ENCODE measurements at regions of chr6 and their contacts with region 1.

Region 1: GRCh38 chr6:33248925-33249731 is 22.5 kb downstream of the VPS52 start:
- DNase-seq: peak; percentile 95 to 98 (median 96)
- H3K4me3 ChIP-seq: peak overlapping the region; percentile 74
- H3K4me3 Mint-ChIP-seq: peak overlapping the region; percentile 82 to 96 (median 89)
- H3K27ac ChIP-seq: peak overlapping the region; percentile 90
- H3K27ac Mint-ChIP-seq: peak overlapping the region; percentile 95 to 99 (median 98)
- H3K4me1 ChIP-seq: peaks cover 24% of the 10 kb centered on the region
- H3K4me1 Mint-ChIP-seq: peaks cover 32 to 42% (median 38%) of the 10 kb centered on the region in 3 donors
- H3K27me3 ChIP-seq: no peaks in the 10 kb centered on the region
- H3K27me3 Mint-ChIP-seq: peaks cover 2 to 4% of the 10 kb centered on the region in 2 donors

Region 2: DNA sequence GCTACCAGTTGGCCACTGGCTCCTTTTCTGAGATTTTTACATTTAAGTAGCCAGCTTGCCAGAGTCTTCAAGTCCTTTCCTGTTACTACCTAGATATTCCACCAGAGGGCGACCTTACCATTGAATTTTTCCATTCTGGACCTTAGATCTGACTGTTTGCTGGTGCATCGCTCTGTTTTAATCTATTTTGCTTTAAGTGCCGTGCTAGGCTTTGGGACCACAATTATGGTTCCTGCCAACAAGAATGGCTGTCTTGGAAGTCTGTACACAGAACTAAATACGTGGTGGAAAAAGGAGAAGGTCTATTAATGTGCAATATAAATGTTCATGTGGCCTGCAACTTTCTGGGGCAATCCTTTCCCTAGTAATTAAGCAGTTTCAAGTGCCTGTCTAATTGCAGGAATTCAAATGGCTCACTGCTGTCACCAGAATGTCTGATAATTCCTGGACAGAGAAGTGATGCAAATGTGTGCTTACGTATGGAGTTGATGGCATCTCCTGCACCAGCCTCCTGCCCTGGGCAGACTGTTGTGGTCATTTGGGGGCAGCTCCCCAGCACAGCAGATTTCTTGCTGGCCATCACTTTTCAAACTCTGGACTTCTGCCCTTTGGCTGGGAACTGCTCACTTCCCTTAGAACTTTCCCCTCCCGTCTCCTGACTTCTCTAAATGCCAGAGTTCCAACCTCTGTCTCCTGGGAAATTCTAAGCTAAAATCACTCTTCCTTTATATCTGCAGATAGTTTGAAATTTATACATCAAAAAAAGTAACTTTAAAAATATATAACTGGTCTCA is 234.1 kb before region 1 on chr6:
- CTCF ChIA-PET with region 1: interaction called, 24 read pairs
- POLR2A ChIA-PET with region 1: no interaction called
- DNase-seq: peak in 4 of 5 donors; percentile 42 to 75 (median 66)
- H3K4me3 ChIP-seq: no peak overlapping the region
- H3K4me3 Mint-ChIP-seq: peak overlapping the region in 1 of 7 donors; percentile 0
- H3K27ac ChIP-seq: no peak overlapping the region
- H3K27ac Mint-ChIP-seq: peak overlapping the region in 1 of 8 donors; percentile 78
- H3K4me1 ChIP-seq: peaks cover 18% of the 10 kb centered on the region
- H3K4me1 Mint-ChIP-seq: peaks cover 25 to 26% (median 26%) of the 10 kb centered on the region in 3 donors
- H3K27me3 ChIP-seq: no peaks in the 10 kb centered on the region
- H3K27me3 Mint-ChIP-seq: peaks cover 5% of the 10 kb centered on the region in 2 donors

Region 3: GRCh38 chr6:33147807-33148666 is 101.1 kb before region 1 on chr6:
- CTCF ChIA-PET with region 1: interaction called, 20 read pairs
- POLR2A ChIA-PET with region 1: no interaction called
- DNase-seq: peak in 1 of 5 donors; percentile 12
- H3K4me3 ChIP-seq: no peak overlapping the region
- H3K4me3 Mint-ChIP-seq: no peak overlapping the region
- H3K27ac ChIP-seq: no peak overlapping the region
- H3K27ac Mint-ChIP-seq: no peak overlapping the region
- H3K4me1 ChIP-seq: no peaks in the 10 kb centered on the region
- H3K4me1 Mint-ChIP-seq: no peaks in the 10 kb centered on the region
- H3K27me3 ChIP-seq: peaks cover 4% of the 10 kb centered on the region
- H3K27me3 Mint-ChIP-seq: peaks cover 15 to 45% of the 10 kb centered on the region in 2 donors

Region 4: DNA sequence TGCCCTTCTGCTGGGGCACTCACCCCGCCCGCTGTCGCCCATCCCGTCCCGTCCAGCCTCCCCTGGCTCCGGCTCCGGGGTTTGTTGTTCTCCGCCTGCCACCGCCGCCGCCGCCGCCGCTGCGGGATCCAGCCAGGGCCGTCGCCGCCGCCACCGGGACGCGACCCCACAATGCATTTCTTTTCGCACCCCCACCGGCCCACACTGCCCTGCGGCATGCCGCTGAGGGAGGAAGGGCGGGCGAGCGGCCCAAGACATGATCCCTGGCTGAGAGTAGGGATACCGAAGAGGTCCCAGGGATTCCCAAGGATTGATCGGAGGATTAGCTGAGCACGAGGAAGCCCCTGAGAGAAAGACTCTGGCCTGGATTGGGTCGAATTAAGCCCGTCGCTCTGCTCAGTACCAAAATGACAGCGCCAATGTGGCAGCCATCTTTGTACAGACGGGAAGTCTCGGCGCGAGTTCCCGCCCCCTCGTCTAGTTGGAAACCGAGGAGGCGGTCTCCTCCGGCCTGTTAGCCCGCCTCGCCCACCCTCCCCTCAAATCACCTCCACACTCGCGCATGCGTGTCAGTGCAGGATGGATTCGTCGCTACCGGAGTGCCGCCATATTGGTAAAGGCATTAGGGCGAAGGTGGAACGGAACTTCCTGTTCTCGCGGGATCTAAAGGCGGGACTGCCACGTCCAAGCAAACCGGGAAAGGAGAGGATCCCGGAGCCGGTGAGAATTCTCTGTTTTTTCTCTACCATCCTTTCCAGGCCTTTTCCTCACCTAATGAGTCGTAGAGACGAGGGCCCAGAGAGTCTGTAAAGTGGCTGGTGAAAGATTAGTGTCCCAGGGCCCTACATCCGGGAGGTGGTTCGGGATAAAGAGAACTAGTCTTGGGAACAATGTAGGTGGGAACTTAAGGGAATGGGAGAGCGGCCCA is 48.6 kb before region 1 on chr6 and contains the starts of genes RXRB and SLC39A7:
- CTCF ChIA-PET with region 1: interaction called, 15 read pairs
- POLR2A ChIA-PET with region 1: interaction called, 6 read pairs
- DNase-seq: peak; percentile 97 to 100 (median 98)
- H3K4me3 ChIP-seq: peak within 1 kb of the TSS; percentile 96
- H3K4me3 Mint-ChIP-seq: peak within 1 kb of the TSS; percentile 98 to 100 (median 99)
- H3K27ac ChIP-seq: peak within 1 kb of the TSS; percentile 92
- H3K27ac Mint-ChIP-seq: peak within 1 kb of the TSS; percentile 98 to 100 (median 99)
- H3K4me1 ChIP-seq: peaks cover 64% of the 10 kb centered on the region
- H3K4me1 Mint-ChIP-seq: peaks cover 68 to 78% (median 77%) of the 10 kb centered on the region in 3 donors
- H3K27me3 ChIP-seq: no peaks in the 10 kb centered on the region
- H3K27me3 Mint-ChIP-seq: no peaks in the 10 kb centered on the region
- total RNA-seq, gene RXRB: 47.1 to 51.4 TPM
- total RNA-seq, gene SLC39A7: 63.1 to 63.6 TPM

Region 5: GRCh38 chr6:33237741-33238140 is 11.4 kb before region 1 on chr6:
- CTCF ChIA-PET with region 1: interaction called, 13 read pairs
- POLR2A ChIA-PET with region 1: no interaction called
- DNase-seq: no peak
- H3K4me3 ChIP-seq: no peak overlapping the region
- H3K4me3 Mint-ChIP-seq: no peak overlapping the region
- H3K27ac ChIP-seq: no peak overlapping the region
- H3K27ac Mint-ChIP-seq: no peak overlapping the region
- H3K4me1 ChIP-seq: no peaks in the 10 kb centered on the region
- H3K4me1 Mint-ChIP-seq: peaks cover 2 to 8% (median 6%) of the 10 kb centered on the region in 3 donors
- H3K27me3 ChIP-seq: peaks cover 8% of the 10 kb centered on the region
- H3K27me3 Mint-ChIP-seq: peaks cover 13 to 44% of the 10 kb centered on the region in 2 donors

Region 6: GRCh38 chr6:33271458-33272274 is 22.5 kb after region 1 on chr6 and contains the starts of genes RPS18 and VPS52:
- CTCF ChIA-PET with region 1: interaction called, 33 read pairs
- POLR2A ChIA-PET with region 1: interaction called, 26 read pairs
- DNase-seq: peak; percentile 83 to 97 (median 94)
- H3K4me3 ChIP-seq: peak within 1 kb of the TSS; percentile 79
- H3K4me3 Mint-ChIP-seq: peak within 1 kb of the TSS; percentile 98 to 100 (median 99)
- H3K27ac ChIP-seq: peak within 1 kb of the TSS; percentile 92
- H3K27ac Mint-ChIP-seq: peak within 1 kb of the TSS; percentile 98 to 100 (median 99)
- H3K4me1 ChIP-seq: peaks cover 49% of the 10 kb centered on the region
- H3K4me1 Mint-ChIP-seq: peaks cover 61 to 75% (median 73%) of the 10 kb centered on the region in 3 donors
- H3K27me3 ChIP-seq: no peaks in the 10 kb centered on the region
- H3K27me3 Mint-ChIP-seq: no peaks in the 10 kb centered on the region
- total RNA-seq, gene RPS18: 3,797 to 3,852 TPM
- total RNA-seq, gene VPS52: 57.2 to 58.5 TPM

Region 7: GRCh38 chr6:33547499-33547898 is 298.4 kb after region 1 on chr6:
- CTCF ChIA-PET with region 1: no interaction called
- POLR2A ChIA-PET with region 1: no interaction called
- DNase-seq: no peak
- H3K4me3 ChIP-seq: no peak overlapping the region
- H3K4me3 Mint-ChIP-seq: peak overlapping the region in 4 of 7 donors; percentile 22 to 74 (median 30)
- H3K27ac ChIP-seq: no peak overlapping the region
- H3K27ac Mint-ChIP-seq: peak overlapping the region in 6 of 8 donors; percentile 14 to 90 (median 72)
- H3K4me1 ChIP-seq: peaks cover 21% of the 10 kb centered on the region
- H3K4me1 Mint-ChIP-seq: peaks cover 15 to 21% (median 18%) of the 10 kb centered on the region in 3 donors
- H3K27me3 ChIP-seq: no peaks in the 10 kb centered on the region
- H3K27me3 Mint-ChIP-seq: peaks cover 0 to 4% of the 10 kb centered on the region in 2 donors

Region 8: DNA sequence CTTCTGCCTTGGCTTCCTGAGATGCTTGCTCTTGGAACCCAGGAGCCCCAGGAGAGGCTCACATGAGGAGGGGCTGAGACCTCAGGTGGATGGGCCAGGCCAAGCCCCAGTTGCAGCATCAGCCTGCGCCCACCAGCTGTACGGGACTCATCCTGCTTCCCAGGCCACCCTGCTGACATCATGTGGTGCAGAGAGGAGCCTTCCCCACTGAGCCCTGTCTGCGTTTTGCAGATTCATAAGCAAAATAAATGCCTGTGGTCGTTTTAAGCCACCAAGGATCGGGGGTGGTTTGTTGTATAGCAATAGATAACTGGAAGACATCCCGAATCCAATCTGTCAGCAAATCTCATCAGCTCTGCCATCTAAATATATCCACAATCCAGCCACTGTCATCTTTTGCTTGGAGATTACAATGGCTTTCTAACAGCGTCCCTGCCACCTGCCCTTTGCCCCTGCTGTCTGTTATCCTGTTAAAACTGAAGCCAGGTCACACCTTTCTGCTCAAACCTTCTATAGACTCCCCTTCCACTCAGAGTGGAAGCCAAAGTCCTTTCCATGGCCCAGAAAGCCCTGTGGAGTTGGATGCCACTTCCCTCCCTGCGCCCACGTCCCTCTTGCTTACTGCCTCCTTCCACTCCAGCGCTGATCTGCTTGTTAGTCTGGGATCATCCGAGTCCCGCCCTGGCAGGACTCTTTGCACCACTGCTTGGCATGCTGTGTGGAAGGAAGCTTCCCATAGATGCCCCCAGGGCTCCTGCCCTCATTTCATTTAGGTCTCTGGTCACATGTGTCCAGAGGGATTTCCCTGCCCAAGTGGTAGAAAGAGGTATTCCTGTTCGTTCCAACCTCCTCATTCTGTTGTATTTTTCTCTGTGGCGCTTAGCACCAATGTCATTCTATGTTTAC is 578.7 kb after region 1 on chr6:
- CTCF ChIA-PET with region 1: no interaction called
- POLR2A ChIA-PET with region 1: no interaction called
- DNase-seq: no peak
- H3K4me3 ChIP-seq: no peak overlapping the region
- H3K4me3 Mint-ChIP-seq: no peak overlapping the region
- H3K27ac ChIP-seq: no peak overlapping the region
- H3K27ac Mint-ChIP-seq: no peak overlapping the region
- H3K4me1 ChIP-seq: no peaks in the 10 kb centered on the region
- H3K4me1 Mint-ChIP-seq: no peaks in the 10 kb centered on the region
- H3K27me3 ChIP-seq: no peaks in the 10 kb centered on the region
- H3K27me3 Mint-ChIP-seq: peaks cover 13 to 17% of the 10 kb centered on the region in 2 donors